Naive thymus-derived CD8-positive, alpha-beta T cell (primary cell): ENCODE measurements at regions of chr4 and their contacts with region 1.

Region 1: GRCh38 chr4:26860157-26860921 is at the start of gene STIM2:
- DNase-seq: peak; percentile 95 to 100 (median 98)
- ATAC-seq: peak; percentile 62
- H3K4me3 Mint-ChIP-seq: peak within 1 kb of the TSS; percentile 96 to 100 (median 99)
- H3K27ac Mint-ChIP-seq: peak within 1 kb of the TSS; percentile 97 to 99 (median 99)
- H3K4me1 Mint-ChIP-seq: peaks cover 30 to 75% (median 65%) of the 10 kb centered on the region in 4 donors
- H3K27me3 Mint-ChIP-seq: no peaks in the 10 kb centered on the region
- polyA plus RNA-seq, gene STIM2: 22.2 to 35.4 (median 33.0) TPM

Region 2: GRCh38 chr4:26837993-26838842 is 22.1 kb before region 1 on chr4:
- POLR2A ChIA-PET with region 1: interaction called, 10 read pairs
- DNase-seq: no peak
- ATAC-seq: no peak
- H3K4me3 Mint-ChIP-seq: peak overlapping the region in 1 of 10 donors; percentile 26
- H3K27ac Mint-ChIP-seq: peak overlapping the region in 6 of 10 donors; percentile 6 to 84 (median 61)
- H3K4me1 Mint-ChIP-seq: peaks cover 5 to 12% (median 11%) of the 10 kb centered on the region in 4 donors
- H3K27me3 Mint-ChIP-seq: no peaks in the 10 kb centered on the region

Region 3: DNA sequence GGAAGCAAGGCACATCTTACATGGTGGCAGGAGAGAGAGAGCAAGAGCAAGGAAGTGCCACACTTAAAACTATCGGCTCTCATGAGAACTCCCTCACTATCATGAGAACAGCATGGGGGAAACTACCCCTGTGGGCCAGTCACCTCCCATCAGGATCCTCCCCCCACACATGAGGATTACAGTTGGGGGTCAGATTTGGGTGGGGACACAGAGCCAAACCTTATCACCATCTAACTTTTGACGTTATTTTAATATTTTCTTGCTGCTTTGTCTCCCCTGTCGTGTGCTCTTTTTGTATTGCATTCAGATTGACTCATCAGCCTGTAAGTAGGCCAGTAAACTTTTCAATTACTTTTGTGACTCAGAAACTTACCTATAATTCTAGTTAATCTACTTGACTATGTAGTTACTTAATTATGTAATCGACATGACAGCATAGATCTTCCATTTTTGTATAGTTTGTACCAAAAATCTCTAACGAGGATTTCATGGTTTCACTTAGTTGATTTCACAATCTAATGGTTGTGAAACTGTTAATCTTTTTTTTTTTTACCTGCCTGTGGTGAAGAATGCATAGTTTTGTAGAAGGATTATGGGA is 18.6 kb after region 1 on chr4:
- POLR2A ChIA-PET with region 1: interaction called, 180 read pairs
- DNase-seq: no peak
- ATAC-seq: no peak
- H3K4me3 Mint-ChIP-seq: peak overlapping the region in 9 of 10 donors; percentile 20 to 69 (median 62)
- H3K27ac Mint-ChIP-seq: peak overlapping the region; percentile 83 to 96 (median 92)
- H3K4me1 Mint-ChIP-seq: peaks cover 26 to 94% (median 76%) of the 10 kb centered on the region in 4 donors
- H3K27me3 Mint-ChIP-seq: no peaks in the 10 kb centered on the region

Region 4: GRCh38 chr4:26892480-26893150 is 32.3 kb after region 1 on chr4:
- POLR2A ChIA-PET with region 1: interaction called, 180 read pairs
- DNase-seq: no peak
- ATAC-seq: no peak
- H3K4me3 Mint-ChIP-seq: no peak overlapping the region
- H3K27ac Mint-ChIP-seq: peak overlapping the region in 9 of 10 donors; percentile 6 to 83 (median 65)
- H3K4me1 Mint-ChIP-seq: peaks cover 19 to 82% (median 71%) of the 10 kb centered on the region in 4 donors
- H3K27me3 Mint-ChIP-seq: no peaks in the 10 kb centered on the region

Region 5: GRCh38 chr4:26985873-26986272 is 125.5 kb after region 1 on chr4:
- POLR2A ChIA-PET with region 1: interaction called, 21 read pairs
- DNase-seq: peak in 7 of 10 donors; percentile 31 to 73 (median 57)
- ATAC-seq: peak; percentile 99 to 100
- H3K4me3 Mint-ChIP-seq: peak overlapping the region; percentile 1 to 65 (median 44)
- H3K27ac Mint-ChIP-seq: peak overlapping the region in 5 of 10 donors; percentile 11 to 63 (median 31)
- H3K4me1 Mint-ChIP-seq: peaks cover 21 to 53% (median 49%) of the 10 kb centered on the region in 4 donors
- H3K27me3 Mint-ChIP-seq: no peaks in the 10 kb centered on the region